Transverse colon (tissue), 4 donors: ENCODE measurements at regions of chr5 and their contacts with region 1.

Region 1: GRCh38 chr5:10283927-10284635 is 23.6 kb downstream of the CMBL start:
- DNase-seq: peak; percentile 90
- H3K4me3 ChIP-seq: no peak overlapping the region
- H3K27ac ChIP-seq: no peak overlapping the region
- H3K4me1 ChIP-seq: peaks cover 9 to 25% (median 16%) of the 10 kb centered on the region in 4 donors
- H3K27me3 ChIP-seq: no peaks in the 10 kb centered on the region
- CTCF ChIP-seq: peak; percentile 87 to 95 (median 93)
- EP300 ChIP-seq: no peak
- POLR2A ChIP-seq: no peak

Region 2: GRCh38 chr5:10441083-10441991 is 157.3 kb after region 1 on chr5 and contains the start of gene ROPN1L:
- in situ Hi-C with region 1: no loop called
- intact Hi-C with region 1: loop called (anchors 10 kb)
- DNase-seq: peak; percentile 88
- H3K4me3 ChIP-seq: peak within 1 kb of the TSS; percentile 31 to 62 (median 42)
- H3K27ac ChIP-seq: peak within 1 kb of the TSS; percentile 76 to 85 (median 82)
- H3K4me1 ChIP-seq: peaks cover 0 to 28% (median 10%) of the 10 kb centered on the region in 4 donors
- H3K27me3 ChIP-seq: peaks cover 14% of the 10 kb centered on the region
- CTCF ChIP-seq: peak in 1 of 5 experiments; percentile 12
- EP300 ChIP-seq: no peak
- POLR2A ChIP-seq: peak; percentile 49
- total RNA-seq, gene ROPN1L: 0.32 to 2.6 TPM in 2 of 4 donors, not detected in the others